ENCODE measurements at regions of chr20 and their contacts with region 1.

Region 1: DNA sequence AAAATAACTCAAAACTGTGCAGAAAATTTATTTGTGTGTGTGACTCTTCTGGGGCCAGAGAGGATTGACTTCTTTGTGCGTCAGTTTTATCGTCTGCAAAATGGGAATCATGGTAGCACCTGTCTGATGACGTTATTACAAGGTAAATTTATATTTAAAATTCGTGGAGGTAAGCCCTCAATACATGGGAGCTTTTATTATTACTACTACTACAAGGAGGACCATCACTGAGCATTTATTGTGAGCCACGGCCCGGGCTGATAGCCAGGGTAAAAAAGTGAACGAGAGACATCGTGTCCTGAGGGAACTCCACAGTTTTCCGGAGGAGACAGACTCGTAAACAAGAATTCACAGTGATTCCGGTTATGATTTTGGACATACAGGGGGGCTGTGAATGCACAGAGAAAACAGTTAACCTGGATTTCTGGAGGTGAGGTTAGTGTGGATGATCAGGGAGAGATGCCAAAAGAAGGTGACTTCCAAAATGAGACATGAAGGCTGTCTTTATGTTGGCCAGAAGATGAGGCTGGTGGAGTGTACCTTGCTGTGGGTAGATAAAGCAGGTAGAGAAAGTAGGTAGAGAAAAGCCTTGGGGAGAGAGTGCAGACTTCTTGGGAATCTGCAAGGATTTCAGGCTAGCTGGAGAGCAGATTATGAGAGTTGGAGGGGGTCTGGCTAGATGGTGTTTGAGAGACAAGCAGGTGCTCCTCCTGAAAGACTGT is 10.6 kb upstream of the SERINC3 start:
- DNase-seq: peak; percentile 25 to 36
- H3K4me3 ChIP-seq: peak overlapping the region; percentile 18 to 91 (median 90)
- H3K27ac ChIP-seq: peak overlapping the region; percentile 6 to 93 (median 78)
- H3K4me1 ChIP-seq: peaks cover 8 to 23% of the 10 kb centered on the region in 2 donors
- H3K27me3 ChIP-seq: no peaks in the 10 kb centered on the region
- CTCF ChIP-seq: no peak
- POLR2A ChIP-seq: peak in 1 of 2 donors; percentile 8

Region 2: DNA sequence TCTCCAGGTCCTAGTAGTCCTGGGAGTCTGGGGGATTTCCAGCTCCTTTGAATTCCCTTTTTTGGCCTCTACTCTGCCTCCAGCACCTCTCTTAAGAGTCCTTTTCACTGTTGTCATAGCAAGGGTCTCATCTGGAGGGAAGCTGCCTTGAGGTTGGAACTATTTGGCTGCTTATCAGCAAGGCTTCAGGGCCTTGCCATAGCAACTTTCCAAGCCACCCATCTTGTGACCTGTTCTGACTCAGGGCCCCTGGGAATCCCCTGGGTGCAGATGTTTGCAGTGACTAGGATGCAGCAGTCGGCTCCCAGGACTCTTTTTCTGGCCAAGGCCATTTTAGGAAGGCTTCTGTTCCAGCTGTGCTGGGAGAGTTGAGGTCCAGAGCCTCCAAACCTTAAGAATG is 62.3 kb after region 1 on chr20:
- intact Hi-C with region 1: no loop called
- DNase-seq: no peak
- H3K4me3 ChIP-seq: no peak overlapping the region
- H3K27ac ChIP-seq: no peak overlapping the region
- H3K4me1 ChIP-seq: peaks cover 0 to 41% of the 10 kb centered on the region in 2 donors
- H3K27me3 ChIP-seq: no peaks in the 10 kb centered on the region
- CTCF ChIP-seq: no peak
- POLR2A ChIP-seq: no peak

Region 3: DNA sequence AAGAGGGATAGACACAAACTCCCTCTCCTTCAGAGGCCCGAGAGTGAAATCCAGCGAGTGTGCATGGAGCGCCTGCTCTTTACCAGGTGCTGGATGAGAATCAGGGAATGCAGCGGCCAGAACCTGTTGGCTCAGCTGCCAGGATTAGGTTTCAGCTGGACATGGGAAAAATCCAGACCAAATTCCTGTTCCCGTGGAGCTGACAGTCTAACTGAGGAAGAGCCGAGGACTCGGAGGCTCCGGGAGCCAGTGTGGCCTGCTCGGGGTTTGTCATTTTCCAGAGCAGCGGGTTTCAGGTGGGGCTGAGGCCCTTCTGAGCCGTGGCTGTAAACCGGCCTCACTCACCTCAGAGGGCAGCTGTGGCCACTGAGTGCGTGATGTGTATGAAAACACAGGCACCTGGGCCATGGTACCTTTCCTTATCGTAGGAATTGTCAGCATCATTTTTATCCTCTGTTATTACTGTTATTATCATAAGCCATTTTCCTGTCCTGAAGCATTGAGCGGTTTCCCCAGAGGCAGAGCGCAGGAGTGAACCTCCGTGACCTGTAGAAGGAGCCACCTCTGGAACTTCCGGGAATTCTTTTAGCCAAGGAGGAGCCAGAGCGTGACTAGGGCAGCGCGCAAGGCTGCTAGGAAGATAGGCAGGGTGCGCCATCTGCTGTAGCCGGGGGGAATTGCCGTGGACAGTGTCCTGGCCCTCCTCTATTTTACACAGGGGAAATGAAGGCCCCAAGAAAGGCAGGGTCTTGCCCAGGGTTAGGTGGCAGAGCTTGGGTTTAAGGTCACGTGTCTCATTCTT is 77.3 kb after region 1 on chr20:
- intact Hi-C with region 1: loop called (anchors 10 kb)
- DNase-seq: peak; percentile 91 to 93
- H3K4me3 ChIP-seq: no peak overlapping the region
- H3K27ac ChIP-seq: peak overlapping the region; percentile 54 to 96 (median 90)
- H3K4me1 ChIP-seq: peaks cover 18 to 31% of the 10 kb centered on the region in 2 donors
- H3K27me3 ChIP-seq: no peaks in the 10 kb centered on the region
- CTCF ChIP-seq: peak; percentile 91 to 99 (median 98)
- POLR2A ChIP-seq: peak in 1 of 2 donors; percentile 29

Region 4: DNA sequence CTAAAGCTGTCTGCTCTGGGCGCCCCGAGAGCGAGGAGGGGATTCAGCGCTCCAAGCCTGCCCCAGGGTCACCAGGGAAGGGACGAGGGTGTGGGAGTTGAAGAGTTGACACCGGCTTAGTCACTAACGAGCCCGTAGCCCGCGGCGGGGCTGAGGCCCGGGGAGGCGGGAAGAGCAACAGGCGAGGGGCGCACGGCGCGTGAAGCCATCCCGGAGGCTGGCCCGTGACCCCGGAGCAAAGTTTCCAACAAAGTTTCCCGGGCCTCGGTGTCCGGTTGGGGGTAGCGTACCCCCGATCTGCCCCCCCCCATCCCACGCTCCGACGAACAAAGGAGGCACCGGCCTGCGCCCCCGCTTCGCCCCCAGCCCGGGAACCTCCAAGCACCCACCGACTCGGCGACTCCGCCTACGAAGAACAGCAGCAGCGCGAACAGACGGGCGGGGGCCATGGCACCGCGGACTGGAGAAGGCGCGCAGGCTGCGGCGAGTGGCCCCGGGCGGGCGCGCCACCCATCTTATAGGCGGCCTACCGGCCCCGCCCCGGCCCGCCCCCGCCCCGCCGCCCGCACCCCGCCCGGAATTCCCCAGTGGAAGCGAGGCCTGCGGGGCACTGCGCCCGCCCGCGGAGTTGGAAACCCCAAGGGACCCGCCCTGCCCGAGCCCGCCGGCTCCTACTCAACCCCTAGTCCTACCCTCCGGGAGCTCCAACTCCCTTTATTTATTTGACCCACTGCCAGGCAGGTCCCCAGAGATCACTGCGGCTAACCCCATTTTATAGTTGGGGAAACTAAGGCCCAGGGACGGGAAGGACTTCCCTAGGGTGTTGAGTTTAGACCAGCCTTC is 815.7 kb after region 1 on chr20 and contains the start of gene SDC4:
- intact Hi-C with region 1: no loop called
- DNase-seq: peak; percentile 69 to 71
- H3K4me3 ChIP-seq: peak within 1 kb of the TSS; percentile 52 to 68 (median 58)
- H3K27ac ChIP-seq: peak within 1 kb of the TSS; percentile 93 to 98 (median 97)
- H3K4me1 ChIP-seq: peaks cover 42 to 48% of the 10 kb centered on the region in 2 donors
- H3K27me3 ChIP-seq: no peaks in the 10 kb centered on the region
- CTCF ChIP-seq: no peak
- POLR2A ChIP-seq: peak; percentile 89 to 94
- total RNA-seq, gene SDC4: 35.5 to 101 (median 63.3) TPM

Measured in thyroid gland (tissue), 4 donors.